Activated naive CD4-positive, alpha-beta T cell treated with anti-CD3 and anti-CD28 coated beads for 36 hours (primary cell): ENCODE measurements at regions of chr1 and their contacts with region 1.

Region 1: DNA sequence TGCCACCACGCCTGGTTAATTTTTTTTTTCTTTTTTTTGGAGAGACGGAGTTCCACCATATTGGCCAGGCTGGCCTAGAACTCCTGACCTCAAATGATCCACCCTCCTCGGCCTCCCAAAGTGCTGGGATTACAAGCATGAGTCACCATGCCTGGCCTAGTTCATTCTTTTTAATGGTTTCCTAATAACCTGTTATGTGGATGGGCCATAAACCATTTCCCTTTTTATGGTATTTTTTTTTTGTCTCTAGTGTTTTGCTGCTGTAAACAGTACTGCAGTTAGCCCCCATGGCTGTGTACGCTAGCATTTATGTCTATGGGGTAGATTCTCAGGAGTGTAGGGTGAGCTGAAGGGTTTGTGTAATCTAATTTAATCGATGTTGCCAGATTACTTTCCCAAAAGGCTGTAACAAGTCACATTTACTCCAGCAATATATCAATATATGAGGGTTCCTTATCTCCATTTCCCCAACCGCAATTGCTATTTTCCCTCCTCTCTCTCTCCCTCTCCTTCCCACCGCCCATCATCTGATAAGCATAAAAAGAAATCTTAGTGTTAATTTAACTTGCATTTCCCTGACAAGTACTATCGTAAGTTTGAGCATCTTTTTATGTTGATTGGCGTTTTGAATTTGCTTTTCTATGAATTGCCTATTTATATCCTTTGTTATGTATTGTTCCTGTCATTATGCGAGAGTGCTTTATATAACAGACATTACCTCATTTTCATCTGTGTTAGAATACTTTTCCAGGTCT is 28.7 kb downstream of the RCSD1 start:
- DNase-seq: no peak
- H3K4me3 Mint-ChIP-seq: no peak overlapping the region
- H3K27ac Mint-ChIP-seq: peak overlapping the region; percentile 33
- H3K4me1 Mint-ChIP-seq: peaks cover 84% of the 10 kb centered on the region
- H3K27me3 Mint-ChIP-seq: no peaks in the 10 kb centered on the region

Region 2: GRCh38 chr1:167676205-167676915 is 17.6 kb after region 1 on chr1:
- CTCF ChIA-PET with region 1: no interaction called
- intact Hi-C with region 1: loop called (anchors 1 kb)
- DNase-seq: peak; percentile 70
- H3K4me3 Mint-ChIP-seq: no peak overlapping the region
- H3K27ac Mint-ChIP-seq: peak overlapping the region; percentile 42
- H3K4me1 Mint-ChIP-seq: peaks cover 35% of the 10 kb centered on the region
- H3K27me3 Mint-ChIP-seq: no peaks in the 10 kb centered on the region

Region 3: DNA sequence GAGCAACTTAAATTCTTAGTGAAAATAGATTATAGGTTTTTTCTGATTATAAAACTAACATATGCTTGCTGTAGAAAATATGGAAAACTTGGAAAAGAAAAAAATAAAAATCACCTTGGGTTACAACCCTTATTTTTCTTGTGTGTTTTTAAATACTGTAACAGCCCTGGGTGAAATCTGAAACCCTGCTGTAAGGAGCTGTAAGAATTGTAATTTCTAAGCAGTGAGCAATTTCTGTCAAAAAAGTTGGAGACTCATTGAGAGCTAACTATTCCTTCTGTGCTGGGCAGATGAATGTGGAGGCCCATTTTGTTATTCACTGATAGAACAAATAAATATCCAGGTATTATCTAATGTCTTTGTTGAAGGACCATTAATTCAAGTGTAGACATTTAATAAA is 212.6 kb after region 1 on chr1:
- CTCF ChIA-PET with region 1: no interaction called
- intact Hi-C with region 1: no loop called
- DNase-seq: no peak
- H3K4me3 Mint-ChIP-seq: no peak overlapping the region
- H3K27ac Mint-ChIP-seq: no peak overlapping the region
- H3K4me1 Mint-ChIP-seq: no peaks in the 10 kb centered on the region
- H3K27me3 Mint-ChIP-seq: no peaks in the 10 kb centered on the region